Posterior vena cava (tissue), 2 donors: ENCODE measurements at regions of chr3 and their contacts with region 1.

Region 1: GRCh38 chr3:122520861-122521260 is 6.1 kb upstream of the KPNA1 start:
- DNase-seq: no peak

Region 2: DNA sequence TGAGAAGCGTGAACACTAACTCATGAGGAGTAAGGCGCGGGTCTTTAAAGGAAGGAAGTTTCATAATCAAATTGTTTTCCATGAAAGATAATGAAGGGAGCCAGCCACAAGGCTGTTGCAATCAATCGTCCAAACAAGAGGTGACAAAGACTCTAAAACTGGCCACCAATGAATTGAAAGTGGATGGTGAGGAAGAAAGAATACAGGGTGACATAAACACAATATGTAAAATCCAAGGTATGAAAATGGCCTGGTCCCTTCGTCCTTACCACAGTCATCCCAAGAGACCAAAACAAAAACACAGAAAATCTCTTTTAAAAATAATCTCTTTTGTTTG is 453.7 kb before region 1 on chr3:
- intact Hi-C with region 1: no loop called
- DNase-seq: no peak

Region 3: DNA sequence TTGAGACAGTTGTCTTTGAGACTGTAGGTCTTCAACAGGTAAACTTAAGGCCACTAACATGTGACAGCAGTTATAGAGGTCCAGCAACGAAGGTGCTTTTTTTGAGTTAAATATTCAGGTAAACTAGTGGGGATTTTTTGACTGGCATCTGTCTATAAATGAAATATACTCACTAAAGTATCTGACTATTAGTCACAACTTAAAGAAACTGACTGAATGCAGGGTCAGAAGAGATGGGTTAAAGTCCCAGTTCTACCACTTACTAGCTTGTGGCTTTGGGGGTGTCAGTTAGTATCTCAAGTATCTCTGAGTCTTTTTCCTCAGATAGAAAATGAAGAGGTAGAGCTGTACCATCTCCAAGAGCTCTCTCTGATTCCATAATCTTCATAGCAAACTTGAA is 155.8 kb before region 1 on chr3:
- intact Hi-C with region 1: no loop called
- DNase-seq: no peak

Region 4: GRCh38 chr3:122505676-122506075 is 15.2 kb before region 1 on chr3:
- intact Hi-C with region 1: loop called in 1 of 2 experiments (anchors 1 kb)
- DNase-seq: no peak